ENCODE measurements at regions of chr5 and their contacts with region 1.

Region 1: DNA sequence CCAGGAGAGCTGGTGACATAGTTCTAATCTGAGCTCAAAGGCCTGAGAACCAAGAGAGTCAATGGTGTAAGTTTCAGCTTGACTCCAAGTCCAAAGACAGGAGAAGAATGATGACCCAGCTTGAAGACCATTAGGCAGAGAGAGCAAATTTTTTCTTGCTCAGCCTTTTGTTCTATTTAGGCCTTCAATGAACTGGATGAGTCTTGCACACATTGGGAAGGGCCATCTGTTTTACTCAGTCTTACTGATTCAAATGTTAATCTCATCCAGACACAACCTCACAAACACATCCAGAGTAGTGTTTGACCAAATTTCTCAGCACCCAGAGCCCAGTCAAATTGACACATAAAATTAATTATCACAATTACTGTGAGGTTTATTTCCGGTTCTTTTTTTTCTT is 7.1 kb upstream of the BTF3 start:
- DNase-seq: no peak
- H3K4me3 ChIP-seq: no peak overlapping the region
- H3K27ac ChIP-seq: no peak overlapping the region
- H3K4me1 ChIP-seq: peaks cover under 1% of the 10 kb centered on the region; the same call in 1 of the 2 replicates
- H3K27me3 ChIP-seq: no peaks in the 10 kb centered on the region
- CTCF ChIP-seq: no peak

Region 2: GRCh38 chr5:72133212-72133990 is 1357.8 kb before region 1 on chr5:
- CTCF ChIA-PET with region 1: interaction called, 11 read pairs
- POLR2A ChIA-PET with region 1: no interaction called
- intact Hi-C with region 1: no loop called
- DNase-seq: peak in 1 of 2 experiments; percentile 53
- H3K4me3 ChIP-seq: no peak overlapping the region
- H3K27ac ChIP-seq: peak overlapping the region; percentile 67
- H3K4me1 ChIP-seq: peaks cover 20% of the 10 kb centered on the region
- H3K27me3 ChIP-seq: no peaks in the 10 kb centered on the region
- CTCF ChIP-seq: no peak

Region 3: DNA sequence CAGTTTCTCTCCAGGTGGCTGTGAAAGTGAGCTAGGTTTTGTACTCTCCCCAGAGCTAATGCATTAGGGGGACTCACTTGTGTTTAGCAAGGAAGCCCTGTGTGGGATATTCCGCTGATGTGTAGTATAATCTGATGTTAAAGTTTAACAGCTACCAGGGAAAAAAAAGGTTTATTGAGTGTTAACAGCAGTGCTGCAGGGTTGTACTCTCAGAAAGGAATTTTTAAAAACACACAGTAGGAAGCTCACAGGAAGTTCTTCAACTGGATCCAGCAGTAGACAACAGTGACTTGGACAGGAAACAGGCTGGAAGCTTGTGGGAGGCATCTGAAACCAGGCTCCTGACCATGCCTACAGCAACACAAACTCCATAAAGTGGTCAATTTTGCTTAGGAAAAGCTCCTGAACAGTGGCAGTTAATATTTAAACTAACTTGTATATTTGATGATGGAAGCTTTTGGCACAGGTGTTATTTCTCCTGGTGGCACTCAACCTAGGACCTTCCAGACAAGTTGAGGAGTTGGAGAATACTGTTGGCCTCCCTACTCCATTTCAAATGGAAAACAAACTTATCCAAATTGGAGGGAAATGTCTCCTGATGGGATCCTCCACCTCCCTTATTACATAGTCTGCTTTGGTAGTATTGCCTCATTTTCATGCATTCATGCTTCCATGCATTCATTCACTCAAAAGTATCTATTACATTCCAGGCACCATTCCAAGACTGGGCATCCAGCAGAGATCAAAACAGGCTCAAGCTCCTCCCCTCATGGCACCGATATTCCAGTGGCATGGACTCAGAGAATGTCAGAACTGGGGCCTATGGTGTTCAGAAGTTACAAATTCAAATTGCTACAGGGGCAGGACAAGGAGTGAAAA is 97.3 kb before region 1 on chr5:
- CTCF ChIA-PET with region 1: no interaction called
- POLR2A ChIA-PET with region 1: no interaction called
- intact Hi-C with region 1: no loop called
- DNase-seq: no peak
- H3K4me3 ChIP-seq: no peak overlapping the region
- H3K27ac ChIP-seq: no peak overlapping the region
- H3K4me1 ChIP-seq: 0 out of 2 replicates have a peak, but pooled peaks cover 5% of the 10 kb centered on the region
- H3K27me3 ChIP-seq: no peaks in the 10 kb centered on the region
- CTCF ChIP-seq: no peak

Region 4: GRCh38 chr5:73812962-73813588 is 321.9 kb after region 1 on chr5:
- CTCF ChIA-PET with region 1: no interaction called
- POLR2A ChIA-PET with region 1: no interaction called
- intact Hi-C with region 1: no loop called
- DNase-seq: no peak
- H3K4me3 ChIP-seq: no peak overlapping the region
- H3K27ac ChIP-seq: no peak overlapping the region
- H3K4me1 ChIP-seq: peaks cover 13% of the 10 kb centered on the region
- H3K27me3 ChIP-seq: no peaks in the 10 kb centered on the region
- CTCF ChIP-seq: no peak